ENCODE measurements at regions of chr12 and their contacts with region 1.

Region 1: GRCh38 chr12:44101475-44101874 is 265.6 kb downstream of the TMEM117 start:
- DNase-seq: no peak
- H3K4me3 Mint-ChIP-seq: no peak overlapping the region
- H3K27ac Mint-ChIP-seq: no peak overlapping the region
- H3K4me1 Mint-ChIP-seq: no peaks in the 10 kb centered on the region
- H3K27me3 Mint-ChIP-seq: no peaks in the 10 kb centered on the region
- CTCF ChIP-seq: no peak

Region 2: DNA sequence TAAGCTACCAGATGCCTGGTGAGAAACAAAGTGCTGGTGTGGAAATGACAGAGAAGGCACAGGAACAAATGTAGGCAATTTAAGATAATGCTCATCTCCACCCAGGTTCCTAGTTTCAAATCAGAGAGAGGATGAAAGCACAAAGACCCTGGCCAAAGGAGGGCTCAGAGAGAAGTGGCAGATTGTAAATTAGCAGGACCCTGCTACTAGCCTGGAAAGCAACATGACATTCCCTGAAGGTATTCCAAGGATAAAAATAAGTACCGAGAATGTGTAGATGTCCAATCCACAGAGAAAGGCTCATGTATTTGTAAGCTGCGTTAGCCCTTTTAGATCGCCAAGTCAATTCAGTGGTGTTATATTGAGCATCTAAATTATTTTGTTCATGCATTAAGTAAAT is 58.4 kb after region 1 on chr12:
- CTCF ChIA-PET with region 1: no interaction called
- POLR2A ChIA-PET with region 1: no interaction called
- intact Hi-C with region 1: loop called (anchors 10 kb)
- DNase-seq: no peak
- H3K4me3 Mint-ChIP-seq: no peak overlapping the region
- H3K27ac Mint-ChIP-seq: no peak overlapping the region
- H3K4me1 Mint-ChIP-seq: no peaks in the 10 kb centered on the region
- H3K27me3 Mint-ChIP-seq: no peaks in the 10 kb centered on the region
- CTCF ChIP-seq: no peak

Region 3: DNA sequence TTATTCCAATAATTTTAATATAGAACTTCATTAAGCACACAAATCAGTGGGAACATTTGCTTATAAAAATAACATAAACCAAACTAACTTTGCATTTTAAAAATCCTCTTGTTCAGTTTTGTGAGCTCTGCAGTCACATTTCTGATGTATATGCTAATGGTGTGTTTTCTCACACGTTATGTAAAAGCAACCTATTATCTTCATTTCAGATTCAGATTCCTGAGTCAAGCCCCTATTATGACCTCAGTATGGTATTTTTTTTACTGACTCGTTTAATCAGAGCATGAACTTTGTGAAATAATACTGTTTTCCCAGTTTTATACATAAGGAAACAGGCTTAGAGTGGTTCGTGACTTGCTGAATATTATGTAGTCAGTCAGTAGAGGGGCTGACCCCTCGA is 128.4 kb after region 1 on chr12:
- CTCF ChIA-PET with region 1: no interaction called
- POLR2A ChIA-PET with region 1: no interaction called
- intact Hi-C with region 1: no loop called
- DNase-seq: no peak
- H3K4me3 Mint-ChIP-seq: no peak overlapping the region
- H3K27ac Mint-ChIP-seq: no peak overlapping the region
- H3K4me1 Mint-ChIP-seq: no peaks in the 10 kb centered on the region
- H3K27me3 Mint-ChIP-seq: no peaks in the 10 kb centered on the region
- CTCF ChIP-seq: no peak